Naive thymus-derived CD4-positive, alpha-beta T cell (primary cell): ENCODE measurements at regions of chr4 and their contacts with region 1.

Region 1: GRCh38 chr4:184649026-184649970 is at the starts of genes CASP3 and PRIMPOL:
- DNase-seq: peak; percentile 90 to 98 (median 93)
- ATAC-seq: peak; percentile 96
- H3K4me3 ChIP-seq: peak within 1 kb of the TSS; percentile 92
- H3K4me3 Mint-ChIP-seq: peak within 1 kb of the TSS; percentile 92 to 99 (median 97)
- H3K27ac ChIP-seq: peak within 1 kb of the TSS; percentile 91
- H3K27ac Mint-ChIP-seq: peak within 1 kb of the TSS; percentile 91 to 97 (median 95)
- H3K4me1 ChIP-seq: peaks cover 26 to 37% of the 10 kb centered on the region in 2 donors
- H3K4me1 Mint-ChIP-seq: peaks cover 47 to 69% (median 54%) of the 10 kb centered on the region in 7 donors
- H3K27me3 ChIP-seq: no peaks in the 10 kb centered on the region
- H3K27me3 Mint-ChIP-seq: no peaks in the 10 kb centered on the region
- total RNA-seq, gene CASP3: 12.4 to 73.4 (median 17.2) TPM
- total RNA-seq, gene PRIMPOL: 12.1 to 19.3 (median 16.7) TPM

Region 2: DNA sequence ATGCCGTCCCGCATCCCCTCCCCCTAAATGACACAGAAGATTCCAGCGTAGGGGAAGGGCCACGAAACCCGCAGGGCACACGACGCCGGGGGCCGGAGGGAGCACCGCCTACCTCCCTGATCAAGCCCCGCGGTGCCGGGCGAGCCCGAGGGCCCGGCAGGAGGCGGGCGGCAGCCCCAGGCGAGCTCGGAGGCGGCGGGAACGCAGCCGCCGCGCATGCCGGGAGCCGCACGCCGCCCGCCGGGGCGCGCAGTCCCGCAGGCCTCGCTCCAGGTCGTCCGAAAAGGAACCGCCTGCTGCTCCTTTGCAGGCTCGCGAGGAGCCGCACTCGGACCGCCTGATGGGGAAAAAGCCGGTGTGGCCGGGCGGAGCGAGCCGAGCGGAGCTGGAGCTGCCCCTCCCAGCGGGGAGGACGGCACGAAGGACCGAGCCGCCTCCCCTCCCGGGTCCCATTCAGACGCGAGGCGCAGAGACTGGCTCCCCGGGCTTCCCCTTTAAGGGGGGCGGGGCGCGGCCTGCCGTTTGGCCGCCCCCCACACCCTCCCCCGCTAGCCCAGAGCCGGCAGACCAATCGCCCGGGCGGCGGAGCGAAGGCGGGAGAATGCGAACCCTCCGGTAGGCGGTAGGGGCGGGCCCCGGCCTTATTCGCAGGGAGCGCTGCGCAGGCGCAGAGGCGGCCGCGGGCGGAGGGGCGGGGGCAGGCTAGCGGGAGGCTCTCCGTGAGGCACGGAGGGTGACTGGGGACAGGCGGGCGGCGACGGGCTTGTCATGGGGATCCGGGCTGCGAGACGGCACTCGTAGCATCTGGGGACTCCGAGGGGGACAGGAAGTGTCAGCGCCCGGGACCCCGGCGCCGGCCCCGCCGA is 1145.0 kb before region 1 on chr4:
- CTCF ChIA-PET with region 1: no interaction called
- POLR2A ChIA-PET with region 1: no interaction called
- intact Hi-C with region 1: loop called (anchors 1 kb)
- DNase-seq: peak; percentile 98 to 100 (median 100)
- ATAC-seq: peak; percentile 89
- H3K4me3 ChIP-seq: peak overlapping the region; percentile 90
- H3K4me3 Mint-ChIP-seq: peak overlapping the region; percentile 83 to 98 (median 92)
- H3K27ac ChIP-seq: peak overlapping the region; percentile 86
- H3K27ac Mint-ChIP-seq: peak overlapping the region; percentile 89 to 99 (median 95)
- H3K4me1 ChIP-seq: peaks cover 6 to 11% of the 10 kb centered on the region in 2 donors
- H3K4me1 Mint-ChIP-seq: peaks cover 11 to 47% (median 43%) of the 10 kb centered on the region in 7 donors
- H3K27me3 ChIP-seq: no peaks in the 10 kb centered on the region
- H3K27me3 Mint-ChIP-seq: no peaks in the 10 kb centered on the region

Region 3: DNA sequence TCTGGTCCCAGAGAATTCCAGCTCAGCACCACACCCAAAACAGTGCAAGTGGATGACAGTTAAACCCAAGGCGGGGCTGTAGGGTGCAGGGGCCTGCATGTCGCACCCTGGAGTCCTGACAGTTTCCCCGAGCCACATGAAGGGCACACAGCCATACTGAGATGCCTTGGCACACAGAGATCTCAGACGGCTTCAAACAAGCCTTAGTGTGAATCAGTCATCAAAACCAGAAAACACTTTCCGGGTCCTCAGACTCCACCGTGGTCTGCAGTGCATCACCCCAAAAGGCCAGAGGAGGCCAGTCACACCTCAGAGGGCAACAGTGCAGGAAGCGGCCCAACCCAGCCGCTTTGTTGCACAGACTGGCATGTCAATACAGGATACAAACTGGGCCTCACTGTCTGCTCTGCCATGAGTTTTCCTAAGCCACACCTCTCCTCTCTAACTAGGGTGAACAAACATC is 367.0 kb before region 1 on chr4:
- CTCF ChIA-PET with region 1: no interaction called
- POLR2A ChIA-PET with region 1: interaction called, 3 read pairs
- intact Hi-C with region 1: loop called in 1 of 2 experiments (anchors 5 kb)
- DNase-seq: peak in 5 of 9 donors; percentile 8 to 56 (median 25)
- ATAC-seq: peak; percentile 75
- H3K4me3 ChIP-seq: no peak overlapping the region
- H3K4me3 Mint-ChIP-seq: peak overlapping the region in 2 of 10 donors; percentile 1 to 25
- H3K27ac ChIP-seq: no peak overlapping the region
- H3K27ac Mint-ChIP-seq: peak overlapping the region in 8 of 9 donors; percentile 17 to 90 (median 64)
- H3K4me1 ChIP-seq: peaks cover 24 to 35% of the 10 kb centered on the region in 2 donors
- H3K4me1 Mint-ChIP-seq: peaks cover 22 to 50% (median 38%) of the 10 kb centered on the region in 7 donors
- H3K27me3 ChIP-seq: no peaks in the 10 kb centered on the region
- H3K27me3 Mint-ChIP-seq: no peaks in the 10 kb centered on the region

Region 4: DNA sequence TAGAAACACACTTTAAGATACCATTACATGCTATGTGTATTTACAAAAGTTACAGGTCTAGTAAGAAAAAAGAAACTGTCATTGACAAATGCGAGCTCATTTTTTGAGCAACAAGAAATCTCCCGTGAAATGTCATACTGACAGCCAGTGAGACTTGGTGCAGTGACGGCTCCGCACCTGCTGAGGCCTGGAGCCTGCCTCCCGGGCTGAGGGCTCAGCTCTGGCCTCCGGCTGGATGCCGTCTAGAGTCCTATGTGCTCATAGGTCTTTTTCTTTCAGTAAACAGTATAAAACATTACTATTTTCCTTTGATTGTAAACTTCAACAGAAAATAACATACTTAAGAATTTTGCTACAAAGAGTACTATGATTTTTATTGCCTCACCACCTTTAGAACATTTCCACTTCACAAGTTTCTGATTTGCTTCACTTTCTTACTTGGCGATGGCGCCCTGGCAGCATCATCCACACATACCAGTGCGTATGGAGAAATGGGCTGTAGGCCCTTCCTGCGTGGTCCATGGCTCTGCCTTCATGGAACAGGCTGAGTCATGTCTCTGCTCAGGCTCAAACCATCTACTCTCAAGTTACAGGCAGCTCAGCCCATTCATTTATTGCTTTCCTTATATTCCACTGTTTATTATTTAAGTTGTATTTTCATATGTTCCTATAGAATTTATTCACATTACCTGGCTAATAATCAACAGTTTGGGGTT is 21.4 kb before region 1 on chr4:
- CTCF ChIA-PET with region 1: no interaction called
- POLR2A ChIA-PET with region 1: interaction called, 4 read pairs
- intact Hi-C with region 1: loop called in 1 of 2 experiments (anchors 2 kb)
- DNase-seq: no peak
- ATAC-seq: no peak
- H3K4me3 ChIP-seq: no peak overlapping the region
- H3K4me3 Mint-ChIP-seq: peak overlapping the region in 1 of 10 donors; percentile 70
- H3K27ac ChIP-seq: no peak overlapping the region
- H3K27ac Mint-ChIP-seq: peak overlapping the region in 4 of 9 donors; percentile 20 to 69 (median 52)
- H3K4me1 ChIP-seq: peaks cover 14 to 28% of the 10 kb centered on the region in 2 donors
- H3K4me1 Mint-ChIP-seq: peaks cover 33 to 52% (median 45%) of the 10 kb centered on the region in 7 donors
- H3K27me3 ChIP-seq: no peaks in the 10 kb centered on the region
- H3K27me3 Mint-ChIP-seq: no peaks in the 10 kb centered on the region

Region 5: GRCh38 chr4:184745831-184746795 is 96.8 kb after region 1 on chr4:
- CTCF ChIA-PET with region 1: no interaction called
- POLR2A ChIA-PET with region 1: no interaction called
- intact Hi-C with region 1: loop called in 1 of 2 experiments (anchors 1 kb)
- DNase-seq: peak; percentile 37 to 82 (median 76)
- ATAC-seq: peak; percentile 93
- H3K4me3 ChIP-seq: no peak overlapping the region
- H3K4me3 Mint-ChIP-seq: peak overlapping the region; percentile 18 to 73 (median 54)
- H3K27ac ChIP-seq: peak overlapping the region; percentile 30
- H3K27ac Mint-ChIP-seq: peak overlapping the region; percentile 58 to 90 (median 88)
- H3K4me1 ChIP-seq: peaks cover 0 to 14% of the 10 kb centered on the region in 2 donors
- H3K4me1 Mint-ChIP-seq: peaks cover 16 to 20% (median 18%) of the 10 kb centered on the region in 7 donors
- H3K27me3 ChIP-seq: no peaks in the 10 kb centered on the region
- H3K27me3 Mint-ChIP-seq: peaks cover 0 to 3% (median 0%) of the 10 kb centered on the region in 5 donors

Region 6: DNA sequence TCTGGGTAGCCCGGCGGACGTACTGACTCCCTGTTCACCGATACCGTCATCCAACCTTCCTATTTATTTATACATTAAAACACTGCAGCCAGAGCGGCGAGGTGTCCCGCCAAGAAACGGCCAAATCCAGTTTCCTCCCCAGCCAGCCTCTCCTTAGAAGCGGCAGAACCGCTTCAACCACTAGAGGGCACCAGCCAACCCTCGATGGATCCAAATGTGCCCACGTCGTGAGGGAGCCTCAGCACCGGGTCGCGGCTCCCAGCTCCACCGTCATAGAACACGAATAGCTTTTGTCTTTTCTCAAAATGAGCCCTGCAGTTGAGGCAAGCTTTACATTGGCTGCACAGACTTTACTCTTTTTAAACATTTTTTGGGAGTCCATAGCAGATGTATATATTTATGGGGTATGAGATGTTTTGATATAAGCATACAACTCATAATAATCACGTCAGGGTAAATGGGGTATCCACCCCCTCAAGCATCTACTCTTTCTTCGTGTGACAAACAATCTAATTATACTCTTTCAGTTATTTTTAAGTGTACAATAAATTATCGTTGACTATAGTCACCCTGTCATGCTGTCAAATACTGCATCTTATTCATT is 356.0 kb after region 1 on chr4:
- CTCF ChIA-PET with region 1: no interaction called
- POLR2A ChIA-PET with region 1: no interaction called
- intact Hi-C with region 1: loop called in 1 of 2 experiments (anchors 2 kb)
- DNase-seq: peak; percentile 45 to 78 (median 66)
- ATAC-seq: peak; percentile 93
- H3K4me3 ChIP-seq: peak overlapping the region; percentile 2
- H3K4me3 Mint-ChIP-seq: peak overlapping the region; percentile 25 to 71 (median 60)
- H3K27ac ChIP-seq: no peak overlapping the region
- H3K27ac Mint-ChIP-seq: peak overlapping the region in 1 of 9 donors; percentile 8
- H3K4me1 ChIP-seq: peaks cover 0 to 3% of the 10 kb centered on the region in 2 donors
- H3K4me1 Mint-ChIP-seq: peaks cover 6 to 9% (median 7%) of the 10 kb centered on the region in 7 donors
- H3K27me3 ChIP-seq: no peaks in the 10 kb centered on the region
- H3K27me3 Mint-ChIP-seq: peaks cover 47 to 54% (median 52%) of the 10 kb centered on the region in 5 donors

Region 7: GRCh38 chr4:185425647-185426352 is 776.5 kb after region 1 on chr4 and contains the start of gene UFSP2:
- CTCF ChIA-PET with region 1: no interaction called
- POLR2A ChIA-PET with region 1: no interaction called
- intact Hi-C with region 1: loop called in 1 of 2 experiments (anchors 2 kb)
- DNase-seq: peak; percentile 88 to 96 (median 92)
- ATAC-seq: peak; percentile 93
- H3K4me3 ChIP-seq: peak within 1 kb of the TSS; percentile 98
- H3K4me3 Mint-ChIP-seq: peak within 1 kb of the TSS; percentile 78 to 97 (median 90)
- H3K27ac ChIP-seq: peak within 1 kb of the TSS; percentile 95
- H3K27ac Mint-ChIP-seq: peak within 1 kb of the TSS; percentile 89 to 100 (median 99)
- H3K4me1 ChIP-seq: peaks cover 16 to 18% of the 10 kb centered on the region in 2 donors
- H3K4me1 Mint-ChIP-seq: peaks cover 25 to 43% (median 38%) of the 10 kb centered on the region in 7 donors
- H3K27me3 ChIP-seq: no peaks in the 10 kb centered on the region
- H3K27me3 Mint-ChIP-seq: peaks cover 0 to 12% (median 7%) of the 10 kb centered on the region in 5 donors
- total RNA-seq, gene UFSP2: 13.9 to 34.5 (median 21.0) TPM